Mucosa of descending colon (tissue), 3 donors: ENCODE measurements at regions of chr11 and their contacts with region 1.

Region 1: DNA sequence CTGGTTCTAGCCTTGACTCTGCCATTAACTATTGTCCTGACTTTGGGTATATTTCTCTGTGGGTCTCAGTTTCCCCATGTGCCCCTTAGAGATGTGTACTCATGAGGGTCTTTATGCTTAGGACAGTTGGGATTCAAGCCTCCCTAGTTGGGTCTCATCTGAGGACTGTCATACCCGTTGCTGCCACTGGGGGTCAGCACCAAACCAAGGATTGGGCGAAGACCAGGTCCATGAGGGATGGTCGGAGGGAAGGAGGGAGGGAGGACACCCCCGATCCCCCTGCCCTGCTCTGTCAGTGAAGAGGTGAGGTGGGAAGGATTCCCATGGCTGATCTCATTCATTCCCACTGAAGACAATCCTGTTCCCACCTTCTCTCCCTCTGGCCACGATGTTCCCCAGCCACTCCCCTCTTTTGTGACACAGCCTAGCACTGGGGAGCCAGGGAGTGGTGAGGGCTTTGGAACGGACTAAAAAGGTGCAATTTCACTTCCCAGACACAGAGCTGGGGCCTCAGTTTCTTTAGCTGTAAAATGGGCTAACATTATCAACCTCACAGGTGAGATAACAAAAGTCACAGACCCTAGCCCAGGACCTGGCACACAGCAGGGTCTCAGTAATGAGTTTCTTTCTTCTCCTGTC is 12.4 kb upstream of the KLHL35 start:
- DNase-seq: peak in 2 of 3 donors; percentile 82 to 85
- ATAC-seq: peak; percentile 79
- H3K4me3 ChIP-seq: no peak overlapping the region
- H3K4me1 ChIP-seq: no peaks in the 10 kb centered on the region
- CTCF ChIP-seq: peak; percentile 79

Region 2: GRCh38 chr11:75532200-75533048 is 87.0 kb after region 1 on chr11:
- intact Hi-C with region 1: loop called (anchors 2 kb)
- DNase-seq: peak; percentile 63 to 84 (median 79)
- ATAC-seq: peak; percentile 83
- H3K4me3 ChIP-seq: no peak overlapping the region
- H3K4me1 ChIP-seq: no peaks in the 10 kb centered on the region
- CTCF ChIP-seq: peak; percentile 64